Dendritic cell treated with granulocyte-macrophage colony-stimulating factor and Interleukin-4, amounts not matched to agents 40 ng/mL and 50 ng/mL, for 4 days (primary cell): ENCODE measurements at regions of chr11 and their contacts with region 1.

Region 1: DNA sequence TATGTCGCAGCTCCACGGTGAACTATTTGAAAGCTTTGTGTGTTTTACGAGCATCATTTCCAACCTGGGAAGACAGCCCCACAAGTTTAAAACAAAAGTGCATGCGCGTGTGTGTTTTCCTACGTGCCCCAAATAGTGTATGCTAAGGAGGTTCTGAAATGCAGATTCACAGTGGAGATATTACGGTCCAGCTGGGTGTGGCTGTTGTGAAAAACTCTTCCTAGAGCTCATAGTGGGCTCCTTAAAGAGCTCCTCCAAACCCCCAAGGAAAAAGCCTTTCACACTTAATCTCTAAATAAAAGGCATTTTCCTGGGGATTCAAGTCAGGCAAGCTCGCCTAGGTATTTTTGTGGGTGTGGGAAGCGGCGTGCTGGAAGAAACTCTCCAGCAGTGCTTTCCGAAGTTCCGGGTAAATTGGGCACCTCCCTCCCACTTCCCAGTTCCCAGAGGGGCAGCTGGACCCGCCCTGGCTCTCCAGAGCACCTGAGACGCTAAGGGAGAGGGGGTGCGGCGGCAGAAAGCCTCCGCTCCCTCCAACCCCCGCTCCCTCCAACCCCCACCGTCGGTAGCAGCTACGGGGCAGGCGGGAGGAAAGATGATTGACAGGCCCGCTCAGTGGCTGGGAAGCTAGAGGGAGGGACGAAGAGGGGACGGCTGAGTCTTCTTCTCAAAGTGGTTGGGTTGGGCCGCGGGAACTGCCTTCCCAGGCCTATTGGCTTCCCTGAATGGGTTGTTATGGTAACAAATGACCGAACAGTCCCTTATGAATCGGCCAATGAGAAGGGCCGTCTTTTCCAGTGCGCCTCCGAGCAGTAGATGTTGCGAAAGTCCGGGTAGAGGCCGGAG is 558 bp upstream of the PCF11 start:
- H3K4me3 Mint-ChIP-seq: peak overlapping the region; percentile 96
- H3K27ac Mint-ChIP-seq: peak overlapping the region; percentile 100
- H3K4me1 Mint-ChIP-seq: peaks cover 19% of the 10 kb centered on the region
- H3K27me3 Mint-ChIP-seq: no peaks in the 10 kb centered on the region

Region 2: GRCh38 chr11:83063073-83063754 is 93.2 kb before region 1 on chr11:
- intact Hi-C with region 1: loop called (anchors 2 kb)
- H3K4me3 Mint-ChIP-seq: peak overlapping the region; percentile 51
- H3K27ac Mint-ChIP-seq: peak overlapping the region; percentile 80
- H3K4me1 Mint-ChIP-seq: peaks cover 64% of the 10 kb centered on the region
- H3K27me3 Mint-ChIP-seq: peaks cover 11% of the 10 kb centered on the region

Region 3: DNA sequence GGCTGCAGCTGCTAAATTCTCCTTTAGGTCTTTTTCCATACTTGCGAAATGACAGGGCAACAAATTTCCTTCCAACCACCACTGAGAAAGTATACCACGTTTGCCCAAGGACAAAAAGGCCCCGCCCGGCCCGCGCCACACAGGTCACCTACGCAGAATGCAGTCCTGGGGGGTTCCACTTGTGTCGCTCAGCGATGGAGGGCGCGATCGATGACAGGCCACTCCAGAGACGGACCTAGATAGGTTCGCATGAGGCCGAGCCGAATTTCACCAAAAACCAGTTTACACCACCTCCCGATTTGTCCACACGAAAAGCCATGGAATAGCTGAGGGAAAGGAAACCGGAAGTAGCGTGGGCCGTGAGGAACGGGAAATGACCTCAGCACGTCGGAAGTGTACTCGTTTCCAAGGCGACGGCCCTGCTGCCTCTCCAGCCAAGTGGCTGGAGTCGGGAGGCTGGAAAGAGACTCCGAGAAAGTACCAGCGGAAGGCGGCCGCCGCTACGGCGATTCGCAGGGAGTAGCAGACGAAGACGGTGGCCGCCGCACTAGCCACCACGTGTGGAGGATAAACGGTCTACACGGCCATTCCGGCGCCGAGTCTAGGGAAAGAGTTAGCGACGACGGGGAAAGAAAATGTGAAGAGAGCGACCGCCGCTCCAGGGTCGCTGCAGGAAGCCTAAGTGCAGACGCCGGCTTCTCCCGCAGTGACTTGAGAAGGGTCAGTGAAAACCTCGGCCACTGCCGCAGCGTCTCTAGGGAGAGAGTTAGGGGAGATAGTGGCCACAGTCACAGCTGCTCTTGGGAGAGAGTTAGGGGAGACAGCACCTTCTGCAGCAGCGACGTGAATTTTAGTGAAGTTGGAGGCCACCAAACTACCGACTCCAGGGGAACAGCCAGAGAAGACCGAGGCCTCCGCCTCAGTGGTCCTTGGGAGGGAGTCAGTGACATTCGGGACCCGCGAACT is 37.2 kb after region 1 on chr11 and contains the start of gene ANKRD42:
- intact Hi-C with region 1: loop called (anchors 1 kb)
- H3K4me3 Mint-ChIP-seq: peak within 1 kb of the TSS; percentile 99
- H3K27ac Mint-ChIP-seq: peak within 1 kb of the TSS; percentile 95
- H3K4me1 Mint-ChIP-seq: peaks cover 38% of the 10 kb centered on the region
- H3K27me3 Mint-ChIP-seq: no peaks in the 10 kb centered on the region

Region 4: GRCh38 chr11:83663446-83663845 is 507.1 kb after region 1 on chr11:
- intact Hi-C with region 1: no loop called
- H3K4me3 Mint-ChIP-seq: no peak overlapping the region
- H3K27ac Mint-ChIP-seq: no peak overlapping the region
- H3K4me1 Mint-ChIP-seq: no peaks in the 10 kb centered on the region
- H3K27me3 Mint-ChIP-seq: no peaks in the 10 kb centered on the region